ENCODE measurements at regions of chr4 and their contacts with region 1.

Region 1: DNA sequence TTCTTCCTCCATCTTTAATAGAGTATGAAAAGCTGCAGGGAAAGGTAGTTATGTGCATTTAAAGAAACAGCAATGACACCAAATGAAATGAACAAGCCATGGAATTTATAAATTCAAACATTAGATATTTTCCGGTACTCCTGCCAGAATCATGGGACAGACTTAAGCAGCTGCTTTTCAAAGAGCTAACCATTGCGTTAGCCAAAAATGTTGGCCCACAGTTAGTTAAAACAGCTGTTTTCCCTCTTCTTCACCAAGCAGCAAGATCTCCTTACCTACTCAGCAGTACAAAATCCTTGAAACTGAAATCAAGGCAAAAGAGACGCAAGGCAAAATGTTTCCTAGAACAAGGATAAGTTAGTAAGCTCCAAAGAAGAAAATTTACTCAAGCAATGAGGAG is 64.0 kb downstream of the MANBA start:
- DNase-seq: no peak
- ATAC-seq: no peak
- H3K4me3 ChIP-seq: no peak overlapping the region
- H3K4me3 Mint-ChIP-seq: no peak overlapping the region
- H3K27ac ChIP-seq: no peak overlapping the region
- H3K27ac Mint-ChIP-seq: no peak overlapping the region
- H3K4me1 ChIP-seq: no peaks in the 10 kb centered on the region
- H3K4me1 Mint-ChIP-seq: no peaks in the 10 kb centered on the region
- H3K27me3 ChIP-seq: no peaks in the 10 kb centered on the region
- H3K27me3 Mint-ChIP-seq: no peaks in the 10 kb centered on the region
- CTCF ChIP-seq: no peak

Region 2: GRCh38 chr4:101693842-101694398 is 1002.8 kb before region 1 on chr4:
- CTCF ChIA-PET with region 1: no interaction called
- POLR2A ChIA-PET with region 1: no interaction called
- intact Hi-C with region 1: no loop called
- DNase-seq: no peak
- ATAC-seq: no peak
- H3K4me3 ChIP-seq: no peak overlapping the region
- H3K4me3 Mint-ChIP-seq: no peak overlapping the region
- H3K27ac ChIP-seq: no peak overlapping the region
- H3K27ac Mint-ChIP-seq: no peak overlapping the region
- H3K4me1 ChIP-seq: no peaks in the 10 kb centered on the region
- H3K4me1 Mint-ChIP-seq: no peaks in the 10 kb centered on the region
- H3K27me3 ChIP-seq: peaks cover 0 to 3% of the 10 kb centered on the region in 2 experiments
- H3K27me3 Mint-ChIP-seq: peaks cover 12% of the 10 kb centered on the region
- CTCF ChIP-seq: no peak

Region 3: GRCh38 chr4:102647117-102647516 is 49.6 kb before region 1 on chr4:
- CTCF ChIA-PET with region 1: no interaction called
- POLR2A ChIA-PET with region 1: no interaction called
- intact Hi-C with region 1: loop called in 1 of 2 experiments (anchors 5 kb)
- DNase-seq: no peak
- ATAC-seq: no peak
- H3K4me3 ChIP-seq: no peak overlapping the region
- H3K4me3 Mint-ChIP-seq: no peak overlapping the region
- H3K27ac ChIP-seq: no peak overlapping the region
- H3K27ac Mint-ChIP-seq: no peak overlapping the region
- H3K4me1 ChIP-seq: peaks cover 11% of the 10 kb centered on the region
- H3K4me1 Mint-ChIP-seq: peaks cover 17% of the 10 kb centered on the region
- H3K27me3 ChIP-seq: no peaks in the 10 kb centered on the region
- H3K27me3 Mint-ChIP-seq: no peaks in the 10 kb centered on the region
- CTCF ChIP-seq: no peak

Region 4: GRCh38 chr4:102684610-102685052 is 12.1 kb before region 1 on chr4:
- CTCF ChIA-PET with region 1: no interaction called
- POLR2A ChIA-PET with region 1: no interaction called
- intact Hi-C with region 1: no loop called
- DNase-seq: no peak
- ATAC-seq: no peak
- H3K4me3 ChIP-seq: no peak overlapping the region
- H3K4me3 Mint-ChIP-seq: no peak overlapping the region
- H3K27ac ChIP-seq: no peak overlapping the region
- H3K27ac Mint-ChIP-seq: no peak overlapping the region
- H3K4me1 ChIP-seq: no peaks in the 10 kb centered on the region
- H3K4me1 Mint-ChIP-seq: no peaks in the 10 kb centered on the region
- H3K27me3 ChIP-seq: no peaks in the 10 kb centered on the region
- H3K27me3 Mint-ChIP-seq: no peaks in the 10 kb centered on the region
- CTCF ChIP-seq: no peak